ENCODE measurements at regions of chr12 and their contacts with region 1.

Region 1: GRCh38 chr12:114160445-114160844 is 194.3 kb upstream of the RBM19 start:
- H3K4me3 ChIP-seq: no peak overlapping the region
- H3K27ac ChIP-seq: no peak overlapping the region
- H3K4me1 ChIP-seq: no peaks in the 10 kb centered on the region
- CTCF ChIP-seq: no peak

Region 2: DNA sequence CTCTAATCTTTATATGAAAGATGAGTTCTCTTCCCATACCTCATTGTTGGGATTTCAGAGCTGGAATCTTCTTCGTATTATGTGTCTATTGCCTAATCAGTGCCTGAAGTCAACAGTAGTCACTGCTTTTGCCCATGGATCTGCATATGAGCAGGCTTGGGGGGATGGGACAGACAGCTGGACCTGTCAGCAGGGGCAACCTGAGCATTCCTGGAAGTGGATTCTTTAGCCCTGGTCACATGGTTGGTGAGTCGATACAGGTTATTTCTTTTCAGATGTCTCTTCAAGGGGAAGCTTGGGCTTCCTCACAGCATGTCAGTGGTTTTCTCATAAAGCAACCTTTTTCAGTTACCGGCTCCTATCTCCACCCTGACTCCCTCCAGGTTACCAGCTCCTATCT is 97.0 kb before region 1 on chr12:
- CTCF ChIA-PET with region 1: no interaction called
- POLR2A ChIA-PET with region 1: no interaction called
- H3K4me3 ChIP-seq: no peak overlapping the region
- H3K27ac ChIP-seq: no peak overlapping the region
- H3K4me1 ChIP-seq: no peaks in the 10 kb centered on the region
- CTCF ChIP-seq: no peak

Region 3: DNA sequence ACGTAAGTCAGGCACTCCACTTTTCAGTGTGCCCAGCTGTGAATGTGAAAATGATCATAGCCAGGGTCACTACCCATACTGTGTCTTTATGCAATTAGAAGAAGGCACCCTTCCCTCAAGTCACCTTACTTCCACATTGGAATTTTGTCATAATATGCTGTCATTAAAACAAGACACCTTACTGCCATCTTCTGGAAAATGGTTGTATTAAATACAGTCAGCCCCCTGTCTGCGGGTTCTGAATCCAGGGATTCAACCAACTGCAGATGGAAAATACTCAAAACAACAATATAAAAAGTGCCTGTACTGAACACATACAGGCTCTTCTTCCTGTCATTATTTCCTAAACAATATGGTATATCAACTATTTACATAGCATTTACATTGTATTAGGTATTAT is 315.7 kb after region 1 on chr12:
- CTCF ChIA-PET with region 1: interaction called, 45 read pairs
- POLR2A ChIA-PET with region 1: no interaction called
- H3K4me3 ChIP-seq: no peak overlapping the region
- H3K27ac ChIP-seq: no peak overlapping the region
- H3K4me1 ChIP-seq: no peaks in the 10 kb centered on the region
- CTCF ChIP-seq: 0 out of 2 replicates have a peak, but pooled peaks have one; percentile 45